ENCODE measurements at regions of chrX and their contacts with region 1.

Region 1: DNA sequence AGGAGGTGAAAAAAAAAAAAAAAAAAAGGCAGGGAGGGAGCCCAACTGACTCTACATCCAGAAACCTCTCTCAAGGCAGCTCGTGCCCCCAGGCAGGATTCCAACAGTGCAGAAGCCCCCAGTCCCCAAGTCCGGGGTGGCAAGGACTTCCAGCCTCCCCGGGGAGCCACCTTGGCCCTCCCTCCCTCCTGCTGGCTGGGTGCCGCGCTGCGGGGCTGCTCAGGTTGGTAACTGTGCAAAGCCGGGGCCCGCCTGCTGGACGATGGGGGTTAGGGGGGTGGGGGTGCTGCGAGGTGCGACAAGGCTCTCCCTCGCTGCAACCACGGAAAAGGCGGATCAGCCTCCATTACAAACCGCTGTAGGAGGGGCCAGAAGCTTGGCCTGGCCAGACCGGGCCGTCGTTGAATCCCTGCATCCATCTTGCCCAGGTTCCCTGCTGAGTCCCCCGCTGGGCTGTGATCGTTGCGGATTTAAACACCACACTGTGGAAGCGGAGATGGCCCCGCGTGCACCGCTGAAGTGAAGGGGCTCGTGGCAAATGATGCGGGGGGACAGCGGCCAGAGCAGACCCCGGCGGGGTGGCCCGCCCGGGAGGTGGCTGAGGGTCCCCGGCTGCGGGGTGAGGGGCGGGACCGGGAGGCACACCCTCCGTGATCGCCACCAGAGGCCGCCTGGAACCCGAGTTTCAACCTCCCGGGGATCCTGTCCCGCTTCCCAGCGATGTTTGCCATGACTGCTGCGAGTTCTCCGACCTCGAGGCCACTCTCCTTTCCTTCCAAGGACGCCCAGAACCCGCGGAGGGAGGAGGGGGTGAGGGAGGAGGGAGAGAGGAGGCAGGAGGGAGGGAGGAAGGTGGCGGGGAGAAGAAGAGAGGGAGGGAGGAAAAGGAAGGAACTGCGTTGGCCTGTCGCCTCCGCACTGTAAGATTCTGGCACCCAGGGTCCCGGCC is 58.0 kb upstream of the DDX3X start:
- DNase-seq: peak; percentile 48
- H3K4me3 ChIP-seq: peak overlapping the region; percentile 52 to 58 (median 53)
- H3K27ac ChIP-seq: no peak overlapping the region
- H3K4me1 ChIP-seq: peaks cover 9% of the 10 kb centered on the region
- H3K27me3 ChIP-seq: no peaks in the 10 kb centered on the region
- CTCF ChIP-seq: peak; percentile 49 to 61
- POLR2A ChIP-seq: no peak

Region 2: GRCh38 chrX:41236629-41237028 is 39.3 kb before region 1 on chrX:
- CTCF ChIA-PET with region 1: no interaction called
- POLR2A ChIA-PET with region 1: no interaction called
- dilution Hi-C with region 1: no loop called
- intact Hi-C with region 1: no loop called
- DNase-seq: no peak
- H3K4me3 ChIP-seq: no peak overlapping the region
- H3K27ac ChIP-seq: no peak overlapping the region
- H3K4me1 ChIP-seq: peaks cover 8% of the 10 kb centered on the region
- H3K27me3 ChIP-seq: no peaks in the 10 kb centered on the region
- CTCF ChIP-seq: no peak
- POLR2A ChIP-seq: no peak

Region 3: GRCh38 chrX:41250867-41251266 is 25.1 kb before region 1 on chrX:
- CTCF ChIA-PET with region 1: no interaction called
- POLR2A ChIA-PET with region 1: no interaction called
- dilution Hi-C with region 1: no loop called
- intact Hi-C with region 1: no loop called
- DNase-seq: peak; percentile 59
- H3K4me3 ChIP-seq: no peak overlapping the region
- H3K27ac ChIP-seq: peak overlapping the region; percentile 59
- H3K4me1 ChIP-seq: no peaks in the 10 kb centered on the region
- H3K27me3 ChIP-seq: no peaks in the 10 kb centered on the region
- CTCF ChIP-seq: no peak
- POLR2A ChIP-seq: no peak

Region 4: GRCh38 chrX:41333744-41334259 is 57.9 kb after region 1 on chrX and contains the start of gene DDX3X:
- CTCF ChIA-PET with region 1: no interaction called
- POLR2A ChIA-PET with region 1: no interaction called
- dilution Hi-C with region 1: no loop called
- intact Hi-C with region 1: loop called (anchors 1 kb)
- DNase-seq: peak; percentile 87
- H3K4me3 ChIP-seq: peak within 1 kb of the TSS; percentile 69 to 95 (median 87)
- H3K27ac ChIP-seq: peak within 1 kb of the TSS; percentile 96
- H3K4me1 ChIP-seq: peaks cover 13% of the 10 kb centered on the region
- H3K27me3 ChIP-seq: no peaks in the 10 kb centered on the region
- CTCF ChIP-seq: no peak
- POLR2A ChIP-seq: peak; percentile 99
- total RNA-seq, gene DDX3X: 300 and 304 TPM in 2 replicates

Region 5: GRCh38 chrX:41441934-41442823 is 166.2 kb after region 1 on chrX:
- CTCF ChIA-PET with region 1: interaction called, 3 read pairs
- POLR2A ChIA-PET with region 1: no interaction called
- dilution Hi-C with region 1: no loop called
- intact Hi-C with region 1: loop called (anchors 1 kb)
- DNase-seq: peak; percentile 53
- H3K4me3 ChIP-seq: peak overlapping the region in 2 of 3 experiments; percentile 7 to 32
- H3K27ac ChIP-seq: no peak overlapping the region
- H3K4me1 ChIP-seq: no peaks in the 10 kb centered on the region
- H3K27me3 ChIP-seq: no peaks in the 10 kb centered on the region
- CTCF ChIP-seq: peak; percentile 44 to 69
- POLR2A ChIP-seq: no peak

Region 6: GRCh38 chrX:41457613-41458192 is 181.8 kb after region 1 on chrX:
- CTCF ChIA-PET with region 1: no interaction called
- POLR2A ChIA-PET with region 1: no interaction called
- dilution Hi-C with region 1: no loop called
- intact Hi-C with region 1: loop called (anchors 1 kb)
- DNase-seq: no peak
- H3K4me3 ChIP-seq: no peak overlapping the region
- H3K27ac ChIP-seq: no peak overlapping the region
- H3K4me1 ChIP-seq: no peaks in the 10 kb centered on the region
- H3K27me3 ChIP-seq: no peaks in the 10 kb centered on the region
- CTCF ChIP-seq: no peak
- POLR2A ChIP-seq: no peak

Region 7: DNA sequence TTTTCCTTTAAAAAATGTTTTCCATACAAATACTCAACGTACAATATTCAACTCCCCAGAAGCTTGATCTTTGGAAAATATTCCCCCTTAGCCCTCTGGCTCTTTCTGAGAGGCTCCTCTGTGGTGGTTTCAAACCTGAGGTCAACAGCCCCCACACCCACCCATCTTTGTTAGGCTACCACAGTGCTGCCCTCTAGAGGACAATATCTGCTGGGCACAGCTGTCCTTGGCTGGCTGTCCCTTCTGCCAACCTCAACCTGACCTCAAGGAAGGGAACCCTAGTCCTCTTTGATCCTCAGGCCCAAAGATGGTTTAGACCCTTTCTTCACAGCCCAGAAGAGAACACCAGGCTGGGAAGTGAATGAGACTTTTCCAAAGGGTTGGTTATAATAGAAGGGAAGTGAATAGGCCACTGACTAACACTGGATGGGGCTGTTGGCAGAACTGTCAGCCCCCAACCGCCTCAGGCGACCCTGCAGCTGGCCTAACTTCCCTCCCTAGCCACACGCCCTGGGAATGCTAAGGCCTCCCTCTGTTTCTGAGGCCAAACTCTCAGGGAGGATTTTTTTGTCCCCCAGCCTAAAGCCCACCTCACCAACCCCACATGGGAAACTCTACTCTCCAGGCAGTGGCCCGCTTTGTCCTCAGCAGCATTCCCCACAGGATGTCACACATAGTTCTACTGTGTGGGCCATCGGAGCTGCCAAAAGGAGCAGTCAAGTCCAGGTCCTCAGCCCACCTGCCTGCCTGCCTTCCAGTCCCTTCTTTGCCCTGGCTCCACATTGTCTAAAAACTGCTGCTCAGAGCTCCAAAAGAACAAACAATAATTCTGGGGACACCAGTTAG is 205.6 kb after region 1 on chrX:
- CTCF ChIA-PET with region 1: no interaction called
- POLR2A ChIA-PET with region 1: no interaction called
- dilution Hi-C with region 1: no loop called
- intact Hi-C with region 1: loop called (anchors 1 kb)
- DNase-seq: peak; percentile 2
- H3K4me3 ChIP-seq: no peak overlapping the region
- H3K27ac ChIP-seq: no peak overlapping the region
- H3K4me1 ChIP-seq: no peaks in the 10 kb centered on the region
- H3K27me3 ChIP-seq: no peaks in the 10 kb centered on the region
- CTCF ChIP-seq: peak; percentile 37 to 42
- POLR2A ChIP-seq: no peak

Region 8: DNA sequence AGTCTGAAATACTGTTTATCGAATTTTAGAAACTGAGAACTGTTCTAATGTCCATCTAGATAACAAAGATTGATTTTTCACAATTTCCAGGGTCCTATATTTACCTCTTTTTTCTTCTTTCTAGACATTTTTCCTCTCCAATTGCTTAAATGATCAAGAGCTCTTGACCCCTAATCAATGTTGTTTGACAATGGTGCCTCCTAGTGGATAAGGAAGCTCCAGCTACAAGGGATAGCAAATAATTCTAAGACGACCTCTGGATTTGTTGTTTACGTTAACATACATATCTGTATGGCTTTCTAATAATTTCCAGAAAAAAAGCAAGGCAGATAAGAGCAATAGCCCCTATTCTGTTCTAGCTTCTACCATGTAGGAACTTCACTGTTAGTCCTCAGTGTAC is 483.9 kb after region 1 on chrX:
- CTCF ChIA-PET with region 1: interaction called, 3 read pairs
- POLR2A ChIA-PET with region 1: no interaction called
- dilution Hi-C with region 1: no loop called
- intact Hi-C with region 1: loop called (anchors 10 kb)
- DNase-seq: peak; percentile 45
- H3K4me3 ChIP-seq: no peak overlapping the region
- H3K27ac ChIP-seq: no peak overlapping the region
- H3K4me1 ChIP-seq: peaks cover 2% of the 10 kb centered on the region
- H3K27me3 ChIP-seq: no peaks in the 10 kb centered on the region
- CTCF ChIP-seq: peak; percentile 18 to 24
- POLR2A ChIP-seq: no peak

Measured in endothelial cell of umbilical vein (primary cell).